ENCODE measurements at regions of chr7 and their contacts with region 1.

Region 1: GRCh38 chr7:100428199-100428966 is at the start of gene ZCWPW1:
- DNase-seq: peak; percentile 93 to 99 (median 96)
- ATAC-seq: peak; percentile 61 to 64
- H3K4me3 Mint-ChIP-seq: peak within 1 kb of the TSS; percentile 89 to 100 (median 99)
- H3K27ac Mint-ChIP-seq: peak within 1 kb of the TSS; percentile 99 to 100 (median 100)
- H3K4me1 Mint-ChIP-seq: peaks cover 26 to 51% (median 46%) of the 10 kb centered on the region in 4 donors
- H3K27me3 Mint-ChIP-seq: peaks cover 0 to 11% (median 0%) of the 10 kb centered on the region in 5 donors
- polyA plus RNA-seq, gene ZCWPW1: 3.1 to 9.3 (median 5.5) TPM

Region 2: DNA sequence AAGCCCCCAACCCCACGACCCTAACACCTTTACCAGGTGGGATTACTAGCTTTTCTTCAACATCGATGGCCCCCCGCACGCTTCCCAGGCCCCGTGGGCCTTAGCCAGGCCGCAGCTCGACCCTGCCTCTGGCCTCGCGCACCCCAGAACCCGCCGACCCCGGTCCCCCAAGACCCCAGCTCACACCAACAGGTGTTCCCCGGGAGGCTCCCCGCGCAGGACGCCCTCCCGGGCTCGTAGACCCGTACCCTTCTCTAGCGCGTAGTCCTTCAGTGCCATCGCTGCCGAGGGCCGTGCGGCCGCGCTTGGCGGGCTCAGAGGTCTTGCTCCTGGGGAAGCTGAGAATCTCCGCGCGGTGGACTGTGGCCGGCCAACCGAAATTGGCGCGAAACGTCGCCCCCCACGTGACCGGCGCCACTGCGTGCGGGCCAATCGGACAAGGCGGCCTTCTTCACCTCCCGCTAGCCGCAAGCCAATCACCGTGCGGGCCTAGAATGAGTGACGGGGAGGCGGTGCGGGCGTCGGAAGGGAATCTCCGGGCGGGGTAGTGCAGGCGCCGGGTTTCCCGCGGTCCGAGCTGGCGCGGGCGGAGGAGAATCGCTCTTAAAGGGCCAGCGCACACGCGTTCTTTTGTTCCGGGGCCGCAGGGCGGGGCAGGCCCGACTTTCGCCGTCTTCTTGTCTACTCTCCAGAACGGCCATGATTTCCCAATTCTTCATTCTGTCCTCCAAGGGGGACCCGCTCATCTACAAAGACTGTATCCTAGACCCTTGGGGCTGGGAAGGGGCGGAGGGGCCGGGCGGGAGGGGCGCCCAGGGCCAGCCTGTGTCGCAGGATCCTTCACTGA is 327.1 kb before region 1 on chr7 and contains the starts of genes AP4M1 and MCM7:
- POLR2A ChIA-PET with region 1: interaction called, 36 read pairs
- DNase-seq: peak; percentile 90 to 97 (median 94)
- ATAC-seq: peak; percentile 86 to 87
- H3K4me3 Mint-ChIP-seq: peak within 1 kb of the TSS; percentile 91 to 97 (median 95)
- H3K27ac Mint-ChIP-seq: peak within 1 kb of the TSS; percentile 93 to 99 (median 97)
- H3K4me1 Mint-ChIP-seq: peaks cover 22 to 45% (median 42%) of the 10 kb centered on the region in 4 donors
- H3K27me3 Mint-ChIP-seq: no peaks in the 10 kb centered on the region
- polyA plus RNA-seq, gene AP4M1: 1.7 to 3.6 (median 2.3) TPM
- polyA plus RNA-seq, gene MCM7: 28.7 to 46.6 (median 40.1) TPM

Region 3: DNA sequence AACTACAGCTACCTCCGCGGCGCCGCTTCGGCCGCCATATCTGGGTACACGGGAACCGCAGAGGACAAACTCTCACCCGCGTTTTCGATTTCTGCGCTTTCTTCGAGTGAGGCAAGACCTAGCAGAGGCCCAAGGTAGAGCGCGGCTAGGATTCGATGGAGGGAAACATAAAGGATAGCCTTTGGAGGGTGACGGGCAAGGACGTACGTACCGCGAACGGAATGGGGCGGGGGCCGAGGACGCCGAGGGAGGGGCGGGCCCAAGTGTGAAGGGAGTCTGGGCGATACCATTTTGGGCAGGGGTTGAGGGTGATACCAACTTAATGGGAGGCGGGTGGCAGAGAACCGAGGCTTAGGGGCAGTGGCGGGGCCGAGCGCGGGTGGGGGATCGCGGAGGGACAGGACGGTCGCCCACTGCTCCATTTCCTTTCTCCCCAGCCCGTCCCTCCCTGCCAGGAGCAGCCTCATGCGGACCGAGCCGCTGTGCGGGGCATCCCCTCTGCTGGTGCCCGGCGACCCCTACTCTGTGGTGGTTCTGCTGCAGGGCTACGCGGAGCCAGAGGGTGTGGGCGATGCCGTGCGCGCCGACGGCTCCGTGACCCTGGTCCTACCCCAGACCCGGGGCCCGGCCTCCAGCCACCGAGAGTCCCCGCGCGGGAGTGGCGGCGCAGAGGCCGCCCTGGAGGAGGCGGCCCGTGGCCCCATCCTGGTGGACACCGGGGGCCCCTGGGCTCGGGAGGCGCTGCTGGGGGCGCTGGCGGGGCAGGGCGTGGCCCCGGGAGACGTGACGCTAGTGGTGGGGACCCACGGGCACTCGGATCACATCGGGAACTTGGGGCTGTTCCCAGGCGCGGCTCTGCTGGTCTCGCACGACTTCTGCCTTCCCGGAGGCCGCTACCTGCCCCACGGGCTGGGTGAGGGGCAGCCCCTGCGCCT is 301.2 kb before region 1 on chr7 and contains the start of gene MBLAC1:
- POLR2A ChIA-PET with region 1: interaction called, 10 read pairs
- DNase-seq: peak; percentile 84 to 98 (median 91)
- ATAC-seq: peak; percentile 75 to 77
- H3K4me3 Mint-ChIP-seq: peak within 1 kb of the TSS; percentile 97 to 100 (median 99)
- H3K27ac Mint-ChIP-seq: peak within 1 kb of the TSS; percentile 99 to 100 (median 100)
- H3K4me1 Mint-ChIP-seq: peaks cover 14 to 49% (median 45%) of the 10 kb centered on the region in 4 donors
- H3K27me3 Mint-ChIP-seq: no peaks in the 10 kb centered on the region
- polyA plus RNA-seq, gene MBLAC1: 2.1 to 2.3 (median 2.1) TPM

Region 4: GRCh38 chr7:100444311-100445278 is 16.2 kb after region 1 on chr7:
- POLR2A ChIA-PET with region 1: interaction called, 57 read pairs
- DNase-seq: no peak
- ATAC-seq: peak in 1 of 2 donors; percentile 29
- H3K4me3 Mint-ChIP-seq: peak overlapping the region in 2 of 10 donors; percentile 43 to 48
- H3K27ac Mint-ChIP-seq: peak overlapping the region in 5 of 10 donors; percentile 22 to 70 (median 57)
- H3K4me1 Mint-ChIP-seq: peaks cover 8 to 13% (median 12%) of the 10 kb centered on the region in 4 donors
- H3K27me3 Mint-ChIP-seq: no peaks in the 10 kb centered on the region

Region 5: DNA sequence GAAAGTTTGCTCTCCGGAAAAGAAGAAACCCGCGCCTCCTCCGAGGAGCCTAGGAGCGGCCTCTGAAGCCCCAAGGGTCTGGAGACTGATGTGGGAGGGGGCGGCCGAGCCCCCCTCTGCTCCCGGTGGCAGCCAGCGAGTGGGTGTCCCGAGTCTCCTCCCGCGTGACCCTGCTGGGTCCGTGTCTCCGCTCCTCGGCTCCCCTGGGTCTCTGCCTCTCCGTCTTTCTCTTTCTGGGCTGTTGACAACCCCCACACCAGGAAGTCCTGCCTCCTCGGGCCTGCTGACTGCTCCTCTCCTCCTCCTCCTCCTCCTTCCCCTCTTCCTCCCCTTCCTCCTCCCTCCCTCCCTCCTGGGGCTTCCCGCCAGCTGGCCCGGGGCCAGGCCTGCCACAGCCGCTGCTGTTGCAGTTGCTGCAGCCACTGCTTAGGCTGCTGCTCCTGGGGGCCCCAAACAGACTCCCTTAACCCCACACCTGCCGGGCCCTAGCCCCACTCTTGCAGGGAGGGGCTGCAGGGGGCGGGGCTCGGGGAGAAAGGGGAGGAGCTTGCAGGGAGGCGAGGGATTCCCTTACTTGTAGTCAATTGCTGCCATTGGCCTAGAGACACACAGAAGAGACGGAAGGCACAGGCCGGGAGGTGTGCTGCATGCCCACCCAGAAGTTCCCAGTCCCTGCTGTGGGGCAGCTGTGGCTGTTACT is 50.7 kb after region 1 on chr7 and contains the start of gene TSC22D4:
- POLR2A ChIA-PET with region 1: interaction called, 17 read pairs
- DNase-seq: peak; percentile 85 to 98 (median 95)
- ATAC-seq: peak; percentile 74 to 76
- H3K4me3 Mint-ChIP-seq: peak within 1 kb of the TSS; percentile 88 to 100 (median 93)
- H3K27ac Mint-ChIP-seq: peak within 1 kb of the TSS; percentile 78 to 96 (median 88)
- H3K4me1 Mint-ChIP-seq: peaks cover 15 to 51% (median 48%) of the 10 kb centered on the region in 4 donors
- H3K27me3 Mint-ChIP-seq: no peaks in the 10 kb centered on the region
- polyA plus RNA-seq, gene TSC22D4: 30.3 to 35.9 (median 31.0) TPM

Region 6: DNA sequence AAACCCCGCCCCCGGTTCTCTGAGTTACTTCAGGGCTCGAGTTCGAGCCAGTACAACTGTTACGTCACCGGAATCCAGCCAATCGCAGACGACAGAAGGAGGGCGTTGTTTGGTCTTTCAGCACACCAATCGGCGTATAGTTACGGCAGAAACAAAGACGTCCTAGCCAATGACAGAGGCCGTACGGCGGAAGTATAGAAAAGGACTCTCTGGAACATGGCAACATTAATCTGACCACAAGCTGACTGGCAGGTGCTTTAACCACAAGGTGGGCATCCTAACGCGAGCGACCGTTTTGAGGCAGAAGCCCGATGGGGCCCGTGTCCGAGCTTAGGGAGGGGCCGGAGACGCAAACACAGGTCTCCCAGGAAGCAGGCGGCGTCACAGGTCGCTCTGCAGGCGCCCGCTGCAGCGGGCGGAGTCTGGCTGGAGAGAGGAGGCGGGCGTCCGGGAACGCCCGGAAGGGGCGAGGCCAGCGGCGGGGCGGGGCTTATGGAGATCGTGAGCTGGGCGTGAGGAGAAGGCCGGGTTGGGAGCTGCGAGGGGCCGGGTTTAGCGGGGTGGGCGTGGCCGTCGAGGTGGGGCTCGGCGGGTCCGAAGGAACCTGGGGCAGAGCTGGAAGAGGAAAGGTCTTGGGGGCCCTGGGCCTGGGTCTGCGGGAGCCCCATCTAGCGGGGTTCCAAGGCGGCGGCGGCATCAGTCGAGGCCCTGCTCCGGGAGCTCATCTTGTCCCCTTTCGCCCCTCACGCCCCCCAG is 183.8 kb after region 1 on chr7 and contains the start of gene MOSPD3:
- POLR2A ChIA-PET with region 1: interaction called, 24 read pairs
- DNase-seq: peak; percentile 95 to 100 (median 98)
- ATAC-seq: peak; percentile 89 to 92
- H3K4me3 Mint-ChIP-seq: peak within 1 kb of the TSS; percentile 95 to 100 (median 98)
- H3K27ac Mint-ChIP-seq: peak within 1 kb of the TSS; percentile 96 to 100 (median 100)
- H3K4me1 Mint-ChIP-seq: peaks cover 10 to 23% (median 21%) of the 10 kb centered on the region in 4 donors
- H3K27me3 Mint-ChIP-seq: no peaks in the 10 kb centered on the region
- polyA plus RNA-seq, gene MOSPD3: 16.0 to 21.0 (median 20.0) TPM

Measured in naive thymus-derived CD8-positive, alpha-beta T cell (primary cell).